Common myeloid progenitor, CD34-positive (primary cell): ENCODE measurements at regions of chr13 and their contacts with region 1.

Region 1: DNA sequence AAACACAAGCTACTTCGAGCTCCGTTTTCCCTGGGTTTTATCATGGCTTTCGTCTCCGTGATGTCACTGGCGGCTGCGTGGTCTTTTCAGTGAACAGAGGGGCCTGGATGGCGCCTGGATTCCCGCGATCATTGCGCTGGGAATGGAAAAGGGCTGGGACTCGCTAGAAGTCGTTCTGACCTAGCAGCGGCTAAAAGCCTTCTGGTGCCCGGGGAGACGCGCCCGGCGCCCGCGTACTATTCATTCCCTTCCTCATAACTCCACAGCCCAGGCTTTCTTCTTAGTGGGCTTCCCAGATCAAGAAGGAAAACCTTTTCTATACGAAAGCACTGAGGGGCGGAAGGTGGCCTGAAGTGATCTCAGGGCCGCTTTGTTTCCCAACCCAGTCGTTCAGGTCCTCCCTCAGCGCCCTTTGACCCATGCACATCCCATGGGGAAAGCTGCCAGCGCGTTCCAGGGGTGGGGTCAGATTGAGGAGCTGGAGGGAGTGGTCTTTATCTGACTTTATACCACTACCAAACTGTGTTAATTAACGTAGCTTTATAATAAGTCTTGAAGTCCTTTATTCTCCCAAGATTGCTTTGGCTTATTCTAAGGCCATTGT is 96.6 kb downstream of the ELF1 start:
- DNase-seq: no peak
- H3K4me3 ChIP-seq: no peak overlapping the region
- H3K27ac ChIP-seq: no peak overlapping the region
- H3K4me1 ChIP-seq: peaks cover 4 to 18% (median 11%) of the 10 kb centered on the region in 4 experiments
- H3K27me3 ChIP-seq: no peaks in the 10 kb centered on the region

Region 2: GRCh38 chr13:40789275-40790133 is 133.0 kb before region 1 on chr13 and contains the start of gene SLC25A15:
- CTCF ChIA-PET with region 1: interaction called, 17 read pairs
- POLR2A ChIA-PET with region 1: no interaction called
- DNase-seq: peak; percentile 82 to 89 (median 86)
- H3K4me3 ChIP-seq: peak within 1 kb of the TSS; percentile 53 to 85 (median 73)
- H3K27ac ChIP-seq: peak within 1 kb of the TSS; percentile 68 to 81
- H3K4me1 ChIP-seq: peaks cover 0 to 16% (median 8%) of the 10 kb centered on the region in 4 experiments
- H3K27me3 ChIP-seq: no peaks in the 10 kb centered on the region

Region 3: DNA sequence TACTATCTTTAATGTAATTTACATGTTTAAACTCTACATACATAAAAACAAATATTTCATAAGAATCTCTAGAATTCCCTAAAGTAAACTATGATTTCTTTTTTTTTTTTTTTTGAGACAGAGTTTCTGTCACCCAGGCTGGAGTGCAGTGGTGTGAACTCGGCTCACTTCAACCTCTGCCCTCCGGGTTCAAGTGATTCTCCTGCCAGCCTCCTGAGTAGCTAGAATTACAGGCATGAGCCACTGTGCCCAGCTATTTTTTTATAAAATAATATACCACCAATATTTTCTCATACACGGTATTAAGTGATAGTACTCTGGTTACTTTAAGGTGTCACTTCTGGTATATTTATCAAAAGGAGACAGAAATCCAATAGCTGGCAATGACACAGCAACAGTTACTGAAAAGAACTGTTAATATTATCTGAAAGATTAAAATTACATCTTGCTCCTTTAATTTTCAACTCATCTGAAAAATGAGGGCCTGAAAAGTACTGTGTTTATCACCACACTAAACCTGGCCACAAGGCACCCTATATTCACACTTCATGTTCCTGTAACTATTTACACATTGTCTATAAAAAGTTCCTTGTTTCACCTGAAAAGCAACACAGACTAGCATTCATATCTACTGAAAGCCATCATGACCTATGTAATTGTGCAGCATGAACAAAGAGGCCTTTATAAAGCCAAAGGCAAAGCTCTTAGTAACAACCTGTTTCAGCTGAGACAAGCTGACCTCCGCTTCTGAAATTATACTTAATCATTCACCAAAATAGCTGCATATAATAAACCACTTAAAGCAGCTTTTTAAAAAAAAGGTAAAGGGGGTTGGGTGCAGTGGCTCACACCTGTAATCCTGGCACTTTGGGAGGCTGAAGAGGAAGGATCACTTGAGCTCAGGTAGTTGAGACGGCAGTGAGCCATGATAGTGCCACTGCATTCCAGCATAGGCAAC is 27.0 kb before region 1 on chr13:
- CTCF ChIA-PET with region 1: no interaction called
- POLR2A ChIA-PET with region 1: no interaction called
- DNase-seq: peak in 1 of 3 donors; percentile 15
- H3K4me3 ChIP-seq: no peak overlapping the region
- H3K27ac ChIP-seq: peak overlapping the region in 1 of 2 experiments; percentile 5
- H3K4me1 ChIP-seq: peaks cover 0 to 3% (median 1%) of the 10 kb centered on the region in 4 experiments
- H3K27me3 ChIP-seq: no peaks in the 10 kb centered on the region